Tibial artery (tissue), 4 donors: ENCODE measurements at regions of chr15 and their contacts with region 1.

Region 1: DNA sequence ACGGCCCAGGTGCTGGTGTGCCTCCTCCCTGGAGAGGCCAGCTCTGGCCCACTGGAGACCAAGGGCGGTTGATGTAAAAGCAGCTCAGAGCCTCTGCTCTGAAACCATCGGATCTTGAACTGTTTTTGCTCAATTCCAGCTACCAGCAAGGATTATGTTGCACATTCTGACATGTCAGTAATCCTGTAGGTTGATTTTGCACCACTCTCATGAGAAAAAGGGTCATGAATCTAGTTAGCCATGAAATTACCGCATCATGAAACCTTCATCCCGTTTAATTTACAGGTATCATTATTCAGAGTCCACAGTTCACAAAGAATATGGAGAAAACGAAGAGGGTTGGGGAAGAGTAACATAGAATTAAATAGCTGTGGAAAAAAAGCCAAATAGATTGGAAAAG is 120.4 kb upstream of the NSMCE3 start:
- DNase-seq: no peak
- H3K4me3 ChIP-seq: no peak overlapping the region
- H3K27ac ChIP-seq: no peak overlapping the region
- H3K4me1 ChIP-seq: no peaks in the 10 kb centered on the region
- H3K27me3 ChIP-seq: no peaks in the 10 kb centered on the region
- CTCF ChIP-seq: no peak

Region 2: DNA sequence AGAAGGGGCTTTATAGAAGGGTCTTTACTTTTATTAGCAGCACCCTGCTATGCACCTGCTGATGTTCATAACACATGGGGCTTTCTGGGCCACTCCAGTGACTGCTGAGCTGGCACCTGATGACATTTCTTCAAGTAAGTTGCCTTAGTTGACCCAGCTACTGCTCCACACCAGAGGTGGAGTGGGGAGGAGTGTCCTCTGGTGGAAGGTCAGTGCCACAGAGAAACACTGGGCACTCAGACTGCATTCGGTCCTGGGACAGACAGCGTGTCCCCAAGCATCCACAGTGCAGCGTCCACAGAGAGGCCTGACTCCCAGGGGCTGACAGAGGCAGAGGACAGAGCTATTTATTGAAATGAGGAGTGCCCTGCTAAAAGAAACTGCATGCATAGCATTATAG is 45.6 kb before region 1 on chr15:
- intact Hi-C with region 1: loop called (anchors 5 kb)
- DNase-seq: no peak
- H3K4me3 ChIP-seq: no peak overlapping the region
- H3K27ac ChIP-seq: no peak overlapping the region
- H3K4me1 ChIP-seq: peaks cover 0 to 5% (median 0%) of the 10 kb centered on the region in 4 donors
- H3K27me3 ChIP-seq: no peaks in the 10 kb centered on the region
- CTCF ChIP-seq: no peak

Region 3: DNA sequence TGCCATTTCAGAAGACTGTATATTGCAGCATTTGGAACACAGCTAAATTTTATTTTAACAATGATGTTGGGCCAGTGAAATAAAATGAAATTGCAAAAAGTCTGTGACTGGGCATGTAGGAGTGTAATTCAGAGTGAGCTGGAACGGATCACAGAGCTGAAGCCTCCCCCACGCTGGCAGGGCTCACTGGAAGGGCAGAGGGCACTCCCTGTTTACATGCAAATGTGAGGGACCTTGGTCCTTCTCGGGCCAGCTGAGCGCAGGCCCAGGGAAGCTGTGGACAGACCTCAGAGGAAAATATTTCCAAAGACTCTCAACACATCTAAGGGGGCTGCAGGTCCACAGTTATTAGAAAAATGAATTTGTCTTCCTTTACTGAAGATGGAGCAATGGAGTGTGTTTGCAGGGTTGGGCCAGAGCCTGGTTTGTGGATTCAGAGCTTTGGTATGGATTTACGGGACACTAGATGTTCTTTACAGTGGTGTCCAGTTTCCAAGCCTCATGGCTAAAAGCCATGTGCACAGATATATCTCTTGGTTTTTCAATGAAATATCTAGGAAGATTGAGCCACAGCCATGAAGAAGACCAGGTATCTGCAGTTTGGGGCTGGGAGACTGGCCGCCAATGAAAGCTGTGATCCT is 1679.4 kb after region 1 on chr15:
- intact Hi-C with region 1: no loop called
- DNase-seq: no peak
- H3K4me3 ChIP-seq: no peak overlapping the region
- H3K27ac ChIP-seq: no peak overlapping the region
- H3K4me1 ChIP-seq: no peaks in the 10 kb centered on the region
- H3K27me3 ChIP-seq: no peaks in the 10 kb centered on the region
- CTCF ChIP-seq: no peak